Cardiac septum (tissue), 1 donor: ENCODE measurements at regions of chr1 and their contacts with region 1.

Region 1: DNA sequence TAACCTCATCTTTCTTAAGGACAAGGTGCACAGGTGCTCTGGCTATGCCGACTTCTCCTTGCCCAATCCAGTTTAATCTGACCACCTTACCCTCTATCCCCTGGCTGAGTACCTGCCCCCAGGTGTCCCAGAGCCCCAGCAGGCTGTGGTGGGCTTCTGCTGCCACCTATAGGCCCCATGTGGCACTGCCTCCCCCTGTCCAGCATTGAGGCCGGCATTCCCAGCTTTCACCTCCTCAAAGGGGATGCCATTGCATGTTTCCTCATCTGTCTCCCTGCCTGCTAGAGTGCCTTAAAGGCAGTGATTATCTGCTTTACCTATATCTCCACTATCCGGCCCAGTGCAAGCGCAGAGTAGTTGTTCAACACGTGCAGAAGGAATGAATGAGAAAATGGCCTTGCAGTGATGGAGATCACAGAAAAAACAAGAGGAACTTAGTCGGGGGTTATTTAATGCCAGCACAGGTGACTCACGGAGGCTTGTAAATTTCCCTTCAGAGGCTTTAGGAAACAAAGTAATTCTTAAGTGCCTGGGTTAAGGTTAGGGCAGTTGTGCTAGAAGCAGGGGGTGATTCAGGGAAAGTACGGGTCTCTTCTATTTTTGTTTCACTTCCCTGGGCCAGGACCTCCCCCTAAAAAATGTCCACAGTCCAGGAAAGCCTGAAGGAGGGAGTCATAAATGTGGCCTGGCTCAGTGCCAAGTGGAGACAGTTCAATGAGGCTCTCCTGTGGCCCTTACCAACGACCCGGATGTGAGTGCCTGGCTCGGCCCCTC is 131.8 kb upstream of the NGF start:
- DNase-seq: no peak

Region 2: GRCh38 chr1:115275212-115275611 is 194.7 kb before region 1 on chr1:
- intact Hi-C with region 1: loop called (anchors 5 kb)
- DNase-seq: no peak

Region 3: DNA sequence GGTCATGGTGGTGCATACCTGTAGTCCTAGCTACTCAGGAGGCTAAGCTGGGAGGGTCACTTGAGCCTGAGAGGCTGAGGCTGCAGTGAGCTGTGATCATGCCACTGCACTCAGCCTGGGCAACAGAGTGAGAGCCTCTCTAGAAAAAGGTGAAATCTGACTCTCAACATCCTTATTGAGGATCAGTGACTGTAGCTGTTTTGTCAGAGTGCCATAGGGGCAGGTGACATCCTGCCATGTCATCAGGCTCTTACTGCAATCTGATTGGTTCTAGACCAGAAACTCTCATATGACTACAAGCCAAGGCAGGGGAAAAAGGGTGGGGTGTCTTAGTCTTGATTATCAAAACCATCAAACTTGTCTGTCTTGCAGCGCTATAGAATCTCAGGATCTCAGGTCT is 69.0 kb before region 1 on chr1:
- intact Hi-C with region 1: no loop called
- DNase-seq: no peak